Brain microvascular endothelial cell (primary cell): ENCODE measurements at regions of chr7 and their contacts with region 1.

Region 1: DNA sequence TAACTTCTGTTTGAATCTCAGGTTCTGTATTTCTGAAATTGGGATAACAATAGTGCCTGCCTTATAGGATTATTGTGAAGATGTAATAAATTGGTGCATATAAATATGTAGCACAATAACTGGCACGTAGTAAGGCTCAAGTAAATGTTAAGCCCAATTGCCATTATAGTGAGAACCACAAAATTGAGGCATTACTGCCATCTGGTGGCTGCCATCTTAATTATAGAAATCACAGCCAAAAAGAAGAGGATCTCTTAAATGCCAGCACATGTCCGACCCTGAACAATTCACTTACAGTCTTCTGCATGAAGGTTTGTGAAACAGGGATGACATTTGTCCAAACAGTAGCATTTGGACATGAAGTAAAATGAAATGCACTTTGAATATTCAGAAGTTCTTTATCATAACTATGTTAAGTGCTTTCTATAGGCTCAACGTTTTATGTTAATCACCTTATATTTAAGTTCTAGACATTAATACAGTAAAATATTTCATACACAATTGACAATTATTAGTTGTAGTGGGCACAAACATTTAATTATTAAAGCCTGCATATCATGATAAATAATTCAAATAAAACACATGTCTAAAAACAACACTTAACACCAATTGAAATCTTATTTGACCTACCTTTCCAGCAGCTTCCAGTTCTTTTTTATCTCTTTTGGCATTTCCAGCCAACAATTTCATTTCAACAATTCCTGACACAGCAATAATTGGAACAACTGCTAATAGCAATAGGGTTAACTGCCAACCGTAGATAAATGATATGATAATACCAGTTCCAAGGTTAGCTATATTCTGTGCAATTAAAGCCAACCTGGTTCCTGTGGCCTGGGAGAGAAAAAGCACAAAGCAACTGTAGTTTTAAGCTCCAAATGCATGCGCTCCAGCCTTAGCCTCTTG is 58.5 kb downstream of the ABCB4 start:
- DNase-seq: peak; percentile 73
- H3K4me3 ChIP-seq: no peak overlapping the region
- H3K27ac ChIP-seq: no peak overlapping the region
- H3K27me3 ChIP-seq: no peaks in the 10 kb centered on the region
- CTCF ChIP-seq: peak; percentile 61

Region 2: GRCh38 chr7:87252166-87252565 is 164.8 kb before region 1 on chr7:
- in situ Hi-C with region 1: no loop called
- DNase-seq: no peak
- H3K4me3 ChIP-seq: no peak overlapping the region
- H3K27ac ChIP-seq: no peak overlapping the region
- H3K27me3 ChIP-seq: no peaks in the 10 kb centered on the region
- CTCF ChIP-seq: no peak

Region 3: GRCh38 chr7:87312215-87312865 is 104.6 kb before region 1 on chr7:
- in situ Hi-C with region 1: loop called (anchors 25 kb)
- DNase-seq: peak; percentile 46
- H3K4me3 ChIP-seq: no peak overlapping the region
- H3K27ac ChIP-seq: no peak overlapping the region
- H3K27me3 ChIP-seq: no peaks in the 10 kb centered on the region
- CTCF ChIP-seq: peak; percentile 99

Region 4: DNA sequence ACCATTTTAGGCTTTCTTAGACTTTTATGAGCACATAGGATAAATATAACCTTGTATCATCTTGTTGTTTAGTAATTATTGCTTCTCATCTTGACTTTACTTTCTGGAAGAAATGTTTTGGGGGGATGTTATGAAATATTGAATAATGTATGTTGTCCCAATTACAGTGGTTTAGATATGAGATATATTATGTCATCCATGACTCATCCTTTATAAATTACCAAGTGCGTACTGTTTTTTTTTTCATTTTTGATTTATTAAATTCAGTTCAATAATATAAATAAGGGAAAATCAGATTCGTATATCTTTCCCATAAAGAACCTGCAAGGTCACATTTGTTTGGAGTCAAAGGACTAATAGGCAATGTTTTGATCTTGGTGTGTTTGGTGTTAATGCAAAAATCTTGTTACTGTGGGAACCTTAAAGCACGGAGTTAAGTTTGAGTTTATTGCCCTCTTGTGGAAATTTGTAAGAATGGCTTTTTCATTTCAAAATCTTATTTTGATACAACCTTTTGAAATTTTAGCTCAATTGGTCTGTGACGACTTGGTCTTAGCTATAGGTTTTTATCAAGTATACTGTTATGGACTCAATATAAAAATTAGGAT is 694.3 kb after region 1 on chr7:
- in situ Hi-C with region 1: no loop called
- DNase-seq: no peak
- H3K4me3 ChIP-seq: no peak overlapping the region
- H3K27ac ChIP-seq: no peak overlapping the region
- H3K27me3 ChIP-seq: no peaks in the 10 kb centered on the region
- CTCF ChIP-seq: peak; percentile 34